ENCODE measurements at regions of chr22 and their contacts with region 1.

Region 1: DNA sequence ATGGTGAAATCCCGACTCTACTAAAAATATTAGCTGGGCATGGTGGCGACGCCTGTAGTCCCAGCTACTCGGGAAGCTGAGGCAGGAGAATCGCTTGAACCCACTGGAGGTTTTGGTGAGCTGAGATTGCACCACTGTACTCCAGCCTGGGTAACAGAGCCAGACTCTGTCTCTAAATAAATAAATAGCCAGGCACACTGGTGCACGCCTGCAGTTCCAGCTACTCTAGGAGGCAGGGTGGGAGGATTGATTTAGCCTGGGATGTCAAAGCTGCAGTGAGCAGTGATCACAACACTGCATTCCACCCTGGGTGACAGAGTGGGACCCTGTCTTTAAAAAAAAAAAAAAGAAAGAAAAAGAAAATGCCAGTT is 17.4 kb downstream of the SUSD2 start:
- DNase-seq: no peak
- ATAC-seq: no peak
- H3K4me3 Mint-ChIP-seq: peak overlapping the region; percentile 65
- H3K27ac Mint-ChIP-seq: peak overlapping the region; percentile 88
- H3K4me1 Mint-ChIP-seq: peaks cover 29% of the 10 kb centered on the region
- H3K27me3 Mint-ChIP-seq: peaks cover 4% of the 10 kb centered on the region

Region 2: DNA sequence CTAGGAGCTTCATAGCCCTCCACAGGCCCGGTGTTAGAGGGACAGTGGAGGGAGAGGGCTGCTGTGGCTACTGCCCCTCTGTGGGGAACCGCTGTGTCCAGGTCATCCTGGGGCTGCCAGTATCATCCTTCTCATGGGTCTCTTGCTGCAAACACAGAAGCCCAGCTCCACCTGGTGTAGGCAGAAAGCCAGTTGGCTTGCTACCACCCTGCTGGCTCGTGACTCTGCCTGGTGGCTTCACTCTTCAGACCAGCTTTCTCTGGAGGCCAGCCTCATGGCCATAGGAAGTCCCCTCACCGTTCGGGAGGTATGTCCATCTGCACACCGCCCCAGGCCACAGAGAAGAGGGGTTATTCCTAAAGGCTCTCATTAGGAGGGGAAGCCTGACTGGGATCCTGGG is 36.8 kb before region 1 on chr22:
- POLR2A ChIA-PET with region 1: no interaction called
- DNase-seq: no peak
- ATAC-seq: no peak
- H3K4me3 Mint-ChIP-seq: no peak overlapping the region
- H3K27ac Mint-ChIP-seq: peak overlapping the region; percentile 42
- H3K4me1 Mint-ChIP-seq: peaks cover 26% of the 10 kb centered on the region
- H3K27me3 Mint-ChIP-seq: no peaks in the 10 kb centered on the region

Region 3: GRCh38 chr22:24244101-24244787 is 45.6 kb after region 1 on chr22:
- POLR2A ChIA-PET with region 1: interaction called, 15 read pairs
- DNase-seq: no peak
- ATAC-seq: no peak
- H3K4me3 Mint-ChIP-seq: peak overlapping the region; percentile 59
- H3K27ac Mint-ChIP-seq: peak overlapping the region; percentile 90
- H3K4me1 Mint-ChIP-seq: peaks cover 35% of the 10 kb centered on the region
- H3K27me3 Mint-ChIP-seq: no peaks in the 10 kb centered on the region